ENCODE measurements at regions of chr15 and their contacts with region 1.

Region 1: DNA sequence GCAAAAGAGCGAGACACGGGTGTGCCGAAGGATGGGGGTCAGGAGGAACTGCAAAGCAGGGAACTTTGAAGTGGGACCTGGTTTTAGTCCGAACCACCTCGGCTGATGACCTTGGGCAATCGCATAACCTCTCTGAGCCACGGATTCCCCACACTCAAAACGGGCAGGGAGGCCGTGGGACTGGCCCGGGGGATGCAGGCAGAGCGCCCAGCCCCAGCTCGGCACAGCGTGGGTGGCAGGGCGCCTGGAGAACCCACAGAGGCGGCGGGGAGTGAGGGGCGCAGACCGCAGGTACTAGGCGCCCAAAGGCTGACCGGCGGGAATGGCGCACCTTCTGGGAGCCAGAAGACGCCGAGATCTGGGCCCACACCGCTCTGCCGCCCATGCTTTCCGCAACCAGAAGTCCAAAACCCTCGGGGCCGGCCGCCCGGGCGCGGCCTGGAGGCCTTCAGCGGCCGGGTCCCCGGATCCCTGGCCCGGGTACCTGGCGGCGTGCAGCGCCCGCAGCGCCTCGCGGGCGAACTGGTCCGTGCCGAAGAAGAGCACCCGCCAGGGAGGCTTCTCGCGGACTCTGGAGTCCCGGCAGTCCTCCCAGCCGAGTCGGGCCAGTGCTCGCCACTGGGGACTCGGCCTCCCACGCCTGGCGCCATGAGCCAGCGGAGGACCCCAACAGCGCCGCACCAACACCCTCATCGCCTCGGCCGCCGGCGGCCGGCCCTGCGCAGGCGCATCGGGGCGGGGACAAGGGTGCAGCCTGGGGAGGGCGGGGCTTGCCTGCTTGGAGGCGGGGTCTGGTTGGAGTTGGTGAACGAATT is at the start of gene MTFMT:
- DNase-seq: peak; percentile 83
- H3K4me3 Mint-ChIP-seq: peak within 1 kb of the TSS; percentile 89
- H3K27ac Mint-ChIP-seq: peak within 1 kb of the TSS; percentile 78
- H3K4me1 Mint-ChIP-seq: peaks cover 23% of the 10 kb centered on the region
- H3K27me3 Mint-ChIP-seq: peaks cover 16% of the 10 kb centered on the region
- total RNA-seq, gene MTFMT: 18.8 and 21.1 TPM in 2 replicates

Region 2: DNA sequence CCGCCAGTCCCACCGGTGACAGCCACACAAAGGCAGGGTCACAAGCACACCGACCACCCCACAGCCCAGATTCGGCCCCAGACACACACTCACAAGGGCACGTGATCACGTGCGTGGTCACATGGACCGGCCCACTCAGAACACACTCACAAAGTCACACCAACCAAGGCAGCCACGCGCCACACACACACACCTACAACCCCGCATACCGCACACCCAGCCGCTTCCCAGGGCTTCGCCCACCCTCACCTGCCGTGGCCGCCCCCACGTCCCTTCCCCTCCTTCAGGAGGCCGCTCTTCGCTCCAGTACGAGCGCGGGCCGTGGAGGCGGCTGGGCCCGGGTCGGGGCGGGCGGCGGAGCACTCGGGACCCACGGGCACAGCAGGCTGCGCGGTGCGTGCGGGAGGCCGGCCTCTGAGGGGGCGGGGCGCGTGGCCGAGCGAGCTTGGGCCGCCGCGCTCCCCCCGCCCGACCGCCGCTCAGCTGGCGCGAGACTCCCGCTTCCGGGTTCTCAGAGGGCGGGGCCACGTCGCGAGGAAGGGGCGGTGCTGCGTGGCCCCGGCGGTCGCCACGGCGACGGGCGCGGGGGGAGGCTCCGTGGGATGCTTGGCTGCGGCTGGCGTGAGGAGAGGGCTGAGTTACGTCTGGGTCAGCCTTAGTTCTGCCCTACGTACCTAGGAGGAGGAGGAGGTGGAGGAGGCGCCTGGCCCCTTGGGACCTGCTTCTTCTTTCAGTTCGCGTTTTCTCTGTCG is 39.5 kb before region 1 on chr15 and contains the start of gene SPG21:
- intact Hi-C with region 1: loop called (anchors 1 kb)
- DNase-seq: peak; percentile 92
- H3K4me3 Mint-ChIP-seq: peak within 1 kb of the TSS; percentile 99
- H3K27ac Mint-ChIP-seq: peak within 1 kb of the TSS; percentile 93
- H3K4me1 Mint-ChIP-seq: peaks cover 51% of the 10 kb centered on the region
- H3K27me3 Mint-ChIP-seq: no peaks in the 10 kb centered on the region
- total RNA-seq, gene SPG21: 70.2 and 73.3 TPM in 2 replicates

Region 3: GRCh38 chr15:65077981-65078352 is 48.8 kb after region 1 on chr15:
- intact Hi-C with region 1: loop called (anchors 1 kb)
- DNase-seq: peak; percentile 29
- H3K4me3 Mint-ChIP-seq: no peak overlapping the region
- H3K27ac Mint-ChIP-seq: no peak overlapping the region
- H3K4me1 Mint-ChIP-seq: peaks cover 16% of the 10 kb centered on the region
- H3K27me3 Mint-ChIP-seq: peaks cover 34% of the 10 kb centered on the region

Region 4: DNA sequence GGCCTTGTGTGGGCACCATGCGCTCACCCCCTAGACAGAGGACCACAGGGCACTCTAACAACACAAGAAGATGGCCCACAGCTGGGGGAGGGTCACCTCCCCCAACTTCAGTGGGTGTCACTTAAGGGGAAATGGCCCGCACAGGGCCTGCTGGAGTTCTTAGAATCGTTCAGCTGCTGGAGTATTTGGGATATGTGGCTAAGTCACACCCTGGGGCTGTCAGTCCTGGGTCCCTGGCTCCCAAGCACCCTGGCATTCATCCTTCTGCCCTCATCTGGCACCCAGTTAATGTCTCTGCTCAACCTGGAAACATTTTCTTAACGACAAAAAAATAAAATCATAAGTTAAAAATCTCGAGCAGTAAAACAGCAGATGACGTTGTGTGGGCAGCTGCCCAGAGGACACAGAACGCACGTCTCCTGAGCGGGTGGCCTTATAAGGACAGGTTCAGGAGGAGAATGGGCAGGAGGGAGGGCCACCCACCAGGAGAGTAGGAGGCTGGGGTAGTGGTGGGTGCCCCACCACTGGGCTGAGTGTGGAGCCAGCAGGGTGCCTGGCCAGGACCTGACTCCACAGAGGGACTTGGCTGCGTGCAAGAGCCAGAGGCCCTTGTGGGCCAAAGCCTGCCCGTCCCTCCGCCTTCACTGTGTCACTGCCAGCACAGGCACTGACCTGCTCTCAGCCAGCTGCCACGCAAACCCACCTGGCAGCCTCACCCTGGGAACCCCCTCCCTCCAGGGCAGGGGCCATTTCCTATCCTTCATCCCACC is 58.9 kb after region 1 on chr15:
- intact Hi-C with region 1: no loop called
- DNase-seq: no peak
- H3K4me3 Mint-ChIP-seq: no peak overlapping the region
- H3K27ac Mint-ChIP-seq: no peak overlapping the region
- H3K4me1 Mint-ChIP-seq: no peaks in the 10 kb centered on the region
- H3K27me3 Mint-ChIP-seq: peaks cover 8% of the 10 kb centered on the region

Region 5: GRCh38 chr15:65275728-65276126 is 246.6 kb after region 1 on chr15:
- intact Hi-C with region 1: loop called (anchors 1 kb)
- DNase-seq: no peak
- H3K4me3 Mint-ChIP-seq: no peak overlapping the region
- H3K27ac Mint-ChIP-seq: no peak overlapping the region
- H3K4me1 Mint-ChIP-seq: peaks cover 25% of the 10 kb centered on the region
- H3K27me3 Mint-ChIP-seq: no peaks in the 10 kb centered on the region

Region 6: DNA sequence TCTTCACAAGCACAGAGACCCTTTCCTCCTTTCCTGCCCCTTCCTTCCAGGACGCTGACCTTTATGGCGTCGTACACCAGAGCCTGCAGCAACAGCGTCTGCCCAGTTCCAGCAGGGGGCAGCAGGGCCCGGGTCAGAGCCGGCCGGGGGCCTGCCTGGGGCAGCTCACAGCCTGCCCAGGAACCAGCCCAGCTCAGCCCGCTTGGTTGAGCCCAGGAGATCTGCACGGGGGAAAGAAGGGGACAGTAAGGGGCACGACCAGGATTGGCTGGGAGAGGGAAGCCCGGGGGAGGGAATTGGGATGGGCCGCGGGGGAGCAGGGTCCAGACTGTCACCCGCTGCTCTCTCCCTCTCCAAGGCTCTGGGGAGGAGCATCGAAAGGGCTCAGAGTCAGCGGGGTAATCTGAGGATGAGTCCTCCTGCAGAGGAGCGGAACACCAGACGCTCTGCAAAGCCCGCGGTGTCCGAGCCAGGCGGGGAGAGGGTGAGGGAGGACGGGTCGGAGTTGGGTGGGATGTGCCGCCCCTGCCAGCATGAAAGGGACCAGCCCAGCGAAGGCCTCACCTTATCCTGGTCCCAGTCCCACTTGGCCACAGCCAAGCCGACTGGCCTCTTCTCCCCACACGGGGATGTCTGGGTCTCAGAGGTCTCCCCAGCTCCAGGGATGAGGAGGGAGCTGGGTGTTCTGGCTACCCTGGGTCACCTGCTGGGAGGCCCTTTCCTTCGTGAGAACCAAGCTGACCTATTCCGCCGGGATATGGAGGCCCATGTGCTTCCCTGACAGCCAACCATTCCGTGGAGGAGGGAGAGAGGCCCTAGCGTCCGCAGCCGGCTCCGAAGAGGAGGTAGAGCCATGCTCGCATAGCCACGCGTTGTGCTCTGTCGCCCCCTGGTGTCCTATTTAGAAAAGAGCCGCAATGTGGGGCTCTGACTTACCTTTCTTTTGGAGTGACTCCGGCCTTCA is 356.0 kb after region 1 on chr15:
- intact Hi-C with region 1: loop called (anchors 5 kb)
- DNase-seq: peak; percentile 77
- H3K4me3 Mint-ChIP-seq: peak overlapping the region; percentile 83
- H3K27ac Mint-ChIP-seq: peak overlapping the region; percentile 86
- H3K4me1 Mint-ChIP-seq: peaks cover 11% of the 10 kb centered on the region
- H3K27me3 Mint-ChIP-seq: peaks cover 28% of the 10 kb centered on the region